Gastrocnemius medialis (tissue), 4 donors: ENCODE measurements at regions of chr2 and their contacts with region 1.

Region 1: DNA sequence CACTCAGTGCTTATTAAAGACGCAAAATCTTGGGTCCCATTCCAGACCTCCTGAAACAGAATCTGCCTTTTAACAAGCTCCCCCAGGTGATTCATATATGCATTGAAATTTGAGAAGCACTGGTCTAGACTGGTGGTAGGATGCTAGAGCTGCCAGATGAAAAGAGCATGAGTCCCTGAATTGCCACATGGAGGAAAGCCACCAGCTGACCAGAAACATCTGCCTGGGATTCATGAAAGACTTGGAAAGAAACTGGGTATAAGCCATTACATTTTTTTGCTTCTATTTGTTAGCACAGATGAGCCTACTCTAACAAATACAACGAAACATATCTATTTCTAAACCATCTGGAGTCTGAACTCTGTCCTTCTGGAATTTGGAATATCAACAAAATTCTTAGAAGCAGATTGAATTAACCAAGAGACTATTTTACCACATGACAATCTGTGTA is 228.9 kb downstream of the RBM43 start:
- DNase-seq: no peak
- ATAC-seq: no peak
- H3K4me3 ChIP-seq: no peak overlapping the region
- H3K27ac ChIP-seq: no peak overlapping the region
- H3K4me1 ChIP-seq: no peaks in the 10 kb centered on the region
- H3K27me3 ChIP-seq: no peaks in the 10 kb centered on the region
- CTCF ChIP-seq: no peak
- POLR2A ChIP-seq: no peak

Region 2: DNA sequence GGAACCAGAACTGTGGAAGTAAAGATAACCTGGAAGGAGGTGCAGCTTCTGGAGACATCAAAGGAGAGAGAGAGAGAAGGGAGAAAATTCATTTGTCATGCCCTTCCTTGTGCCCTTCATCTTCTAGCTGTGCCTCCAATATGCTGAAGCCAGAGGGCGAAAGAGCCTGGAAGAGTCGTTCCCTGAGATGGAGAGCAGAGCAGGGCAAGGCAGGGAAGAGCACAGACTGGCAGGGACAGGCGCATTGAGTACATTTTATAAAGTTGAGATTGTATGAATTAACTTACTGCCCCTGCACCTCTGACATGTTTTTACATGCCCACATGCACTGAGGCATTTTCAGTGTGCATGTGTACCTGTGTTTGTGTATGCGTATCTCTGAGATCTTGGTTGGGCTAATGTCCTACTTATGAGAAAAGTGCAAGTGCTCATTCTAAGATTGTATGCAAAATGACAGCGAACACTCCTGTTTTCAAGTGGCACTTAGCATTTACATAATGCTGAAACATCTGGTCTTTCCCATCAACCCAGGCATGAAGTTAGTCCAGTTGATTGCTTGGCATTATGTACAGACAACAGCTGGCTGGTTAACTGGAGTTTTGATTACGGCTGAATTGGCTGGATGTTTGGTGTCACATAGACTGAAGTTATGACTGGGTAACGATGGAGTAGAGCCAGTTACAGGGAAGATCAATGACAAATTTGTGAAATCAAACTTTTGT is 1421.5 kb before region 1 on chr2:
- in situ Hi-C with region 1: loop called in 1 of 4 experiments (anchors 25 kb)
- intact Hi-C with region 1: no loop called
- DNase-seq: no peak
- ATAC-seq: peak in 1 of 2 donors; percentile 19
- H3K4me3 ChIP-seq: no peak overlapping the region
- H3K27ac ChIP-seq: no peak overlapping the region
- H3K4me1 ChIP-seq: peaks cover 0 to 9% of the 10 kb centered on the region in 2 donors
- H3K27me3 ChIP-seq: no peaks in the 10 kb centered on the region
- CTCF ChIP-seq: no peak
- POLR2A ChIP-seq: no peak